A549 (cell line): ENCODE measurements at regions of chr16 and their contacts with region 1.

Region 1: DNA sequence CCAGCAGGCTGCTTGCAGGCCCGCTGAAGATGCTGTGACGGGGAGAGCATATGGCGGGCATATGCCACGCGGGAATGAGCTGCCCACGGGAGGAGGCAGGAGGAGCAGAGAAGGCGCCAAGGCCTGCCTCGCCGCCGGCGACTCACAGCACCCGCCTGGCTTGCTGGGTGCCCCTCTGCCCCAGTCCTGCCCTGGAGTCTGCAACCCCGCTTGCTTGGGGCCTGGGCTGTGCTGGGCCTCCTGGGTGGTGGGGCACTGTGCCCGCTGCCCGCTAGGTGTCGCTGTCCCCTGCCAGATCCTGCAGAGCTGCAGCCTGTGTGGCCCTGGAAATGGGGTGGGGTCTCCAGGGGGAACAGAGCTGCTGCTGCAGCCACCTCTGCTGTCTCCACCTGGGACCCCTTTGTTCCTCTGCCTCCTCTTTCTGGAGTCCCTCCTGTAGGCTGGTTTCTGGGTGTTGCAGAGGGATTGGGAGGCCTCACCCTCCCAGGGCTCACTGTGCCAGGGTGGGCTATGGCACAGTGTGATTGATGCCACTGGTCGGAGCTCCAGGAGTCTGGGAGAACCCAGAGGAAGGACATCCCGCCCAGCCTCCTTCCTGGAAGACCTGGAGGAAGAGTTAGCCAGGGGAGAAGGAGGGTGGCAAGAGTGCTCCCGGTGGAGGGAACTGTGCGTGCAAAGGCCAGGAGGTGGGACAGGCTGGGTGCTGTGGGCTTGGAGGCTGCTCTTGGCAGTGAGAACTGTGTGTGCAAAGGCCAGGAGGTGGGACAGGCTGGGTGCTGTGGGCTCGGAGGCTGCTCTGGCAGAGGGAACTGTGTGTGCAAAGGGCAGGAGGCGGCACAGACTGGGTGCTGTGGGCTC is 141.0 kb upstream of the CIBAR2 start:
- DNase-seq: peak; percentile 51 to 85
- ATAC-seq: peak; percentile 81 to 96
- H3K4me3 ChIP-seq: no peak overlapping the region
- H3K27ac ChIP-seq: no peak overlapping the region
- H3K4me1 ChIP-seq: no peaks in the 10 kb centered on the region
- CTCF ChIP-seq: peak; percentile 86
- EP300 ChIP-seq: no peak
- POLR2A ChIP-seq: no peak
- RAD21 ChIP-seq: peak; percentile 41 to 46; a peak in 3 of 5 replicates

Region 2: DNA sequence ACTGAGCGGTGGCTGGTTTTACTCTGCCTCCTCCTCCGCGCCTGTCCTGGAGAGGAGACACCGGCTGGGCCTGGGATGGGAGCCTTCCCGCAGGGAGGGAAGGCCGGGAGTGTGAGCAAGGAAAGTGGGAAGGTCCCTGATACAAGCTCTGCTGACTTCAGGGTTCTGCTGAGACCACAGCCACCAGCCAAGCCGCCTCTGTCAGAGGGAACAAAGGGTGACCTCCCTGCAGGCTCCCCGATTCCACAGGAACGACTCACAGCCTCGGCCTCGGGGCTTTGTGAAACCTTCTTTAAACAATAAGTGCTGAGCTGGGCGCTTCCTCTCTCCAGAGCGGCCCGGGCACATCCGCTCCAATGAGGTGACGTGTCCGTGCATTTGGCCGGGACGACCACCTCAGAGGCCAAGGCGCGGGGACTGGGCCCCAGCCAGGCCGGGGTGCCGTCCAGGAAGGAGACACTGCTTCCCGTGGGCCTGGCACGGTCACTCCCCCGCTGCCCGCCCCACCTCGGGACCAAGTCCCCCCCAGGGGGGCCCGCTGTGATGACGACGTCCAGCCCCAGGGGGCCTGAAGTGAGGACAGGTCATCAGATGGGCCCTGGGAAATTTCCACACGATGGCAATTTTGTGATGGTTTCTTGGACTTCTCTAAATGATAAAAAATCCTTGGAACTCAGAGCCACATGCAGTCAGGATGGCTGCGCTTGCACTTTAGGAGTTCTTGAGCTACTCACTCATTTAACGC is 129.2 kb before region 1 on chr16:
- CTCF ChIA-PET with region 1: no interaction called
- POLR2A ChIA-PET with region 1: no interaction called
- DNase-seq: peak in 1 of 2 experiments; percentile 34
- ATAC-seq: peak; percentile 36 to 62; a peak in 4 of 6 replicates
- H3K4me3 ChIP-seq: no peak overlapping the region
- H3K27ac ChIP-seq: peak overlapping the region in 1 of 2 experiments; percentile 80; a peak in 3 of 6 replicates
- H3K4me1 ChIP-seq: 0 out of 3 replicates have a peak, but pooled peaks cover 3% of the 10 kb centered on the region
- CTCF ChIP-seq: no peak
- EP300 ChIP-seq: no peak
- POLR2A ChIP-seq: no peak
- RAD21 ChIP-seq: no peak

Region 3: DNA sequence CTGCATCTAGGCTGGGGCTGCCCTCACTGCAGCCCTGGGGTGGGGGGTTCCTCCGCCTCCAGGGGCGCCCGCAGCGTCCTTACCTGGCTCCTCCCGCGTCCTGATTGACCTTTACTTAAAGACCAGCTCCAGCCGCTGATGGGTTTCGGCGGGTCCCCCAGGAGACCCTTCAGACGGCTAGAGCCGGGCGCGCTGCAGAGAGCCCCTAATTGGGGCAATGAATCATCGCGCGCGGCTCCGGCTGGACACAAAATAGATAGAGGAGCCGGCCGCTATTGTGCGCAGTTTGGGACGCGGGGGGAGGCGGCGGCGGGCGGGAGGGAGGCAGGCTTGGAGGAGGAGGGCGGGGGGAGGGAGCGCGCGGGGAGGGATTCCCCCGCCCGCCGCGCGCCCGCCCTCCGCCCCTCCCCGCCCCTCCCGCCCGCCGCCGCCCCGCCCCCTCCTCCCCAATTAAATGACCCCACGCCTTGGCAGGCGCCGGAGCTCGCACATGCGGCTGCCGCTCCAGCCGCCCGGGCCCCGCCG is 84.5 kb before region 1 on chr16:
- CTCF ChIA-PET with region 1: interaction called, 11 read pairs
- POLR2A ChIA-PET with region 1: no interaction called
- DNase-seq: peak in 1 of 2 experiments; percentile 60
- ATAC-seq: 0 out of 6 replicates have a peak, but pooled peaks have one; percentile 5 to 7
- H3K4me3 ChIP-seq: peak overlapping the region; percentile 73
- H3K27ac ChIP-seq: peak overlapping the region; percentile 34 to 92; a peak in 5 of 6 replicates
- H3K4me1 ChIP-seq: peaks cover 44% of the 10 kb centered on the region
- CTCF ChIP-seq: no peak
- EP300 ChIP-seq: no peak
- POLR2A ChIP-seq: no peak
- RAD21 ChIP-seq: no peak

Region 4: GRCh38 chr16:85220125-85220839 is 33.0 kb before region 1 on chr16:
- CTCF ChIA-PET with region 1: interaction called, 16 read pairs
- POLR2A ChIA-PET with region 1: no interaction called
- DNase-seq: no peak
- ATAC-seq: peak in 1 of 2 experiments; percentile 33; a peak in 2 of 6 replicates
- H3K4me3 ChIP-seq: no peak overlapping the region
- H3K27ac ChIP-seq: peak overlapping the region in 1 of 2 experiments; percentile 57; a peak in 2 of 6 replicates
- H3K4me1 ChIP-seq: peaks cover 7% of the 10 kb centered on the region; the same call in 1 of the 3 replicates
- CTCF ChIP-seq: no peak
- EP300 ChIP-seq: no peak
- POLR2A ChIP-seq: no peak
- RAD21 ChIP-seq: no peak

Region 5: DNA sequence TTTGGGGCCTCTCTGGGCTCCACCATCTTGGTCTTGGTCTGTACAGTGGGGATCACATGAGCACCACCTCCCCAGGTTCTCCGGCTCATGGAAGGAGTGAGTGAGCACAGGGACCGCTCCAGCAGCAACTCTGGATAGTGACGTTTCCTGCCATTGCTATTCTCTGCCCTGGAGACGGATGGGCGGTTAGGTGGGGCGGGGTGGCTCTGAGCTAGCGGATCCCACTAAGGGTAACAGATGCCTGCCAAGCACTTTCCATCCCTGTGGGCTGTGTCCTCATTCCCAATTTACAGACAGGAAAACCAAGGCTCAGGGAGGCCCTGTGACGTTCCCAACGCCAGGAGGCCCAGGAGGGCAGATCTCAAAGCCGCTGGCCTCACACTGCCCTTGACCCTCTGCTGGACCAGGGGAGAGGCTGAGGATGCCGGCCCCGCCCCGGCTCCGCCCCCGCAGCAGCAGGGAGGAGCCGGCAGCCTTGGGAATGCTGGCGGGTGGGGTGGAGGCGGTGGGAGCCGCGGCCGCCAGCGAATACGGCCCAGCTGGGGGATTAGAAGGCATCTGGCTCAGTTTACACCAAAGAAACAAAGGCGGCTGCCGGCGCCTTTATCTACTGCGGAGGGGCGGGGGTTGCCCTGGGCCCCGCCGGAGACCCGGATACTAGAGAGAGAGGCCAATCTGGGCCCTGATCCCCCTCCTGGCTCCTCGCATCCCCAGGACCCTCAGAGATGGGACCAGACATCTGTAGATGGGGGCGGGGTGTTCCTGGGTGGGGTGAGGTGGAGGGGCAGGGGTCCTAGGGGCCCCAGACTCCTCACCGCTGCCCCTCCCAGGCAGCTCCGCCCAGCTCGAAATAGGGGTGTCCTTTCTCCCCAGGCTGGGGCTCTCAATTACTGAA is 18.8 kb before region 1 on chr16:
- CTCF ChIA-PET with region 1: interaction called, 155 read pairs
- POLR2A ChIA-PET with region 1: interaction called, 3 read pairs
- DNase-seq: peak; percentile 37 to 75
- ATAC-seq: peak; percentile 48 to 85; a peak in 4 of 6 replicates
- H3K4me3 ChIP-seq: peak overlapping the region; percentile 42
- H3K27ac ChIP-seq: peak overlapping the region in 1 of 2 experiments; percentile 73; a peak in 3 of 6 replicates
- H3K4me1 ChIP-seq: peaks cover 15% of the 10 kb centered on the region; the same call in 2 of the 3 replicates
- CTCF ChIP-seq: no peak
- EP300 ChIP-seq: no peak
- POLR2A ChIP-seq: no peak
- RAD21 ChIP-seq: no peak

Region 6: GRCh38 chr16:85270374-85270773 is 17.1 kb after region 1 on chr16:
- CTCF ChIA-PET with region 1: interaction called, 80 read pairs
- POLR2A ChIA-PET with region 1: no interaction called
- DNase-seq: no peak
- ATAC-seq: no peak
- H3K4me3 ChIP-seq: no peak overlapping the region
- H3K27ac ChIP-seq: no peak overlapping the region
- H3K4me1 ChIP-seq: no peaks in the 10 kb centered on the region
- CTCF ChIP-seq: no peak
- EP300 ChIP-seq: no peak
- POLR2A ChIP-seq: no peak
- RAD21 ChIP-seq: no peak